ENCODE measurements at regions of chr3 and their contacts with region 1.

Region 1: DNA sequence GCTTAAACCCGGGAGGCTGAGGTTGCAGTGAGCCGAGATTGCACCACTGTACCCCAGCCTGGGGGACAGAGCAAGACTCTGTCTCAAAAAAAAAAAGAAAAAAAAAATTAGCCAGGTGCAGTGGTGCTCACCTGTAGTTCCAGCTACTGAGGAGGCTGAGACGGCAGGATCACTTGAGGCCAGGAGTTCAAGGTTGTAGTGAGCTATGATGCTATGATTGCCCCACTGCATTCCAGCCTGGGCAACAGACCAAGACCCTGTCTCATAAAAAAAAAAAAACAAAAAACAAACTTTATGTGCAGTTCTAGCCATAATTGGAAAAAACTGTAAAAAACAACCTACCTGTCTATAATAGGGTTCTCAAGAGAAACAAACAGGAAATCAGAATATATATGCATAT is 39.9 kb upstream of the IGF2BP2 start:
- DNase-seq: no peak
- H3K4me3 ChIP-seq: no peak overlapping the region
- H3K27ac ChIP-seq: no peak overlapping the region
- H3K4me1 ChIP-seq: no peaks in the 10 kb centered on the region
- H3K27me3 ChIP-seq: no peaks in the 10 kb centered on the region
- CTCF ChIP-seq: no peak
- POLR2A ChIP-seq: no peak

Region 2: DNA sequence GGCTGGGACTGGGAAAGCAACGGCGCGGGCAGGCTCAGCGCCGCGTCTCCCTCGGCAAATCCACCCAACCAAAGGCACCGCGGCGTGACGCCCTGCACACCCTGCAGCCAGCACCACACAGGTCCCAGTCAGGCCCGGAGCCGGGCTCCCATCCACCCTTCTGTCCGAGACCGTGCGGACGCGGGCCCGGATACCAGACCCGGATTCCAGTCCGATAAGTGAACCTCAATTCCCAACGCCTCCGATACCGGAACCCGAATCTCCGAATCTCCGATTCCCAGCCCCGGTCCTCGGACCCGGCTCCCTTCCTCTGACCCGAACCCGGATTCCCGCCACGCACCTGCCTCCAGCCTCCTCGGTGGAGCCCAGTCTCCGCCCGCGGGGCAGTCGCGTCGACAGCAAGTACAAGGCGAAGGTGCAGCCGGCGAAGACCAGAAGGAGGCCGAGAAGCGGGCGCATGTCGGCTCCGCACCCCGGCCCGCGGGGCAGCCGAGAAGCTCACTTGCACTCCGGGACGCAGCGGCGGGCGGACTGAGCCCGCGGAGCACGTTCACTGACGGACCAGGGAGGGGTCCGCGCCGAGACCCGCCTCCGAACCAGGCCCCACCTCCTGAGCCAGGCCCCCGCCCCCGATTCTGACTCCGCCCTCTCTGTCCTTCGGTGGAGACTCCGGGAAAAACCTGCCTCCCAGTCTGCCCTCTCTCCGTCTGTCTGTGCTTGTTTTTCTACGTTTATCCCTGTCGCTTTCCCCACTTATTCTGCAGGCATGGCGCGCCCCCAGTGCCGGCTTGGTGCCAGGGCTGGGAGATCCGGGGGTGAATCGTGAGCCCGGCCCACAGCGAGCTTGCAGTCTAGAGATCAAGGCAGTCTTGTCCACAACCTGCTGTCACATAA is 366.0 kb before region 1 on chr3 and contains the start of gene TMEM41A:
- intact Hi-C with region 1: no loop called
- DNase-seq: peak; percentile 89 to 96
- H3K4me3 ChIP-seq: peak within 1 kb of the TSS; percentile 80 to 95 (median 80)
- H3K27ac ChIP-seq: peak within 1 kb of the TSS; percentile 80 to 81
- H3K4me1 ChIP-seq: peaks cover 0 to 11% of the 10 kb centered on the region in 2 donors
- H3K27me3 ChIP-seq: no peaks in the 10 kb centered on the region
- CTCF ChIP-seq: no peak
- POLR2A ChIP-seq: peak; percentile 43
- total RNA-seq, gene TMEM41A: 11.5 to 22.2 (median 15.1) TPM

Region 3: GRCh38 chr3:185846037-185846436 is 18.7 kb before region 1 on chr3:
- intact Hi-C with region 1: no loop called
- DNase-seq: no peak
- H3K4me3 ChIP-seq: no peak overlapping the region
- H3K27ac ChIP-seq: no peak overlapping the region
- H3K4me1 ChIP-seq: no peaks in the 10 kb centered on the region
- H3K27me3 ChIP-seq: no peaks in the 10 kb centered on the region
- CTCF ChIP-seq: no peak
- POLR2A ChIP-seq: no peak

Region 4: DNA sequence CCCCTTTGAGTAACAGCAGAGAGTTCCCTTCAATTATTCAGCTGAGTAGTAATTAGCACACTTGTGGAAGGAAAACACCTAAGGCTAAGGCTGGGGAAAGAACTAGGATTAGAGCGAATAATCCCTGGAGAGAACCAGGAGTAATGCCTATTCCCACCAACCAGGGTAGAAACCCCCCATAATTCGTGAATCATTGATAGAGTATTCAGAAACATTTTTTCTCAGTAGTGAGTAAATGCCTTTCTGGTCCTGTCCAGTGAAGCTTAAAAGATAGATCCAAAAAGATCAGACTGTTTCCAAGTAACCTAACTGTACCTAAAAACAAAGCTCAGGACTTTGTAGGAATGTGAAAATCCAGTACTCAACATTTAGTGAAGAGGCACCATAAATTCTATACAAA is 426.0 kb after region 1 on chr3:
- intact Hi-C with region 1: loop called (anchors 5 kb)
- DNase-seq: no peak
- H3K4me3 ChIP-seq: no peak overlapping the region
- H3K27ac ChIP-seq: no peak overlapping the region
- H3K4me1 ChIP-seq: no peaks in the 10 kb centered on the region
- H3K27me3 ChIP-seq: no peaks in the 10 kb centered on the region
- CTCF ChIP-seq: no peak
- POLR2A ChIP-seq: no peak

Measured in breast epithelium (tissue), 4 donors.